B cell (primary cell): ENCODE measurements at regions of chr10 and their contacts with region 1.

Region 1: DNA sequence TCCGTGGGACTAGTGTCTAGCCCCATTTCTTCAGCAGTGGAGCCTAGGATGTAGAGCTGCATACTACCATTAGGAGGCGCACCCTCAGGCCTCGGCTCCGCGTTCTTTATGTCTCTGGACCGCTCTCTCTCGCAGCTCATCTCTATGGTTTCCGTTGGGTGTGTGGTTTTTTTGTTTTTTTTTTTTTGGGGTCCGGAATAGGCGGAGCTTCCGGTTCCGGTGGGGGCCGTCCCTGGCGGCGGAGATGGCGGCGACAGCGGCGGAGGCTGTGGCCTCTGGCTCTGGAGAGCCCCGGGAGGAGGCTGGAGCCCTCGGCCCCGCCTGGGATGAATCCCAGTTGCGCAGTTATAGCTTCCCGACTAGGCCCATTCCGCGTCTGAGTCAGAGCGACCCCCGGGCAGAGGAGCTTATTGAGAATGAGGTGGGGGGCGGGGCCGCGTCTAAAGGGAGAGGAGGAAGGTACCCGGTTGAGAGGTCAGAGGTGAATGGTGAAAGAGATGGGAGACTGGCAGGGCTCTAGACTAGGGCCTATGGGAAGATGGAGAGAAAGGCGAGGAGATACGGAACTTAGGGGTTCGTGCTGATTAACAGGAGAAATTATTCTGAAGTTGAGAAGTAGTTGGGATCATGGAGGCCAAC is at the start of gene HIF1AN:
- DNase-seq: peak; percentile 96
- ATAC-seq: peak; percentile 99
- H3K4me3 ChIP-seq: peak within 1 kb of the TSS; percentile 74 to 88 (median 75)
- H3K4me3 Mint-ChIP-seq: peak within 1 kb of the TSS; percentile 42
- H3K27ac ChIP-seq: peak within 1 kb of the TSS; percentile 34 to 83
- H3K27ac Mint-ChIP-seq: peak within 1 kb of the TSS; percentile 32
- H3K4me1 ChIP-seq: peaks cover 23 to 24% of the 10 kb centered on the region in 2 donors
- H3K4me1 Mint-ChIP-seq: peaks cover 19% of the 10 kb centered on the region
- H3K27me3 ChIP-seq: no peaks in the 10 kb centered on the region
- H3K27me3 Mint-ChIP-seq: no peaks in the 10 kb centered on the region
- CTCF ChIP-seq: peak; percentile 86
- total RNA-seq, gene HIF1AN: 65.6 and 73.8 TPM in 2 replicates

Region 2: DNA sequence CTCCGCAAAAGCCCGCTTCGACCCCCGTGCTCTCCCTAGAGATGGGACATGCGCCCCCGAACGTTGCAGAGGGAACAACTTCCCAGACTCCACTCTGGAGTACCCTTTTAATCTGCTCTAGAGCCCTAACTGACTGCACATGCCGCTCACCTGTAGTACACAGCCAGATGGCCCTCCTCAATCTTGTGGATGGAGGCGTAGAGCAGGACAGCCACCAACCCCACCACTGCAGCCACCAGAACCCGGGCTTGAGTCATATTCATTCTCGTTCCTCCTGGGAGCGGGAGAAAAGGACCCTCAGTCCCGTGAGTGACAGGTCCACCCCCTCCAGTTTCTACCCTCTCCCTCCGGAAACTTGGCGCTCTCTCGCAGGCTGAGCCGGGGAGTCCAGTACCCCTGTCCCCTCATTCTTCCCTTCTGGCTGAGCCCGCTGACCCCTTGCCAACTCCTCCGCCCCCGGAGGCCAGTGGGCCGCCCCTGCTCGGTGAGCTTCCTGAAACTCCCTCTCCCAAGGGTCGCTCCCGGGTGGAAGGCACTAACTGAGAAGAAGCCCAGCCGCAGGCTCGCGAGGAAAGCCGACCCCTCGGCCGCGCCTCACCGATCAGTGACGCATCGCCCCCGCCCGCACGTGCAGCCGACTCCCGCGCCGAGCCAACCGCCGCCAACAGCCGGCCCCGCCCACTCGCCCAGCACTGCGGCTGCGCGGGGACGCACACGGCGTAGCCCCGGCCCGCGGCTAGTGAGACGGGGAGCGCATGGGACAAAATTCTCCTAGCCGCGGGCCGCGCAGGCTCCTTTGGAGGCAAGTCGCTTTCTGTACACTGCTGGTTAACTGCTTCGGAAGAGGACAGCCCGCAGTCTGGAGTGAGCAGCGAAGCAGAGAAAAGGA is 350.2 kb before region 1 on chr10 and contains the start of gene ERLIN1:
- CTCF ChIA-PET with region 1: no interaction called
- POLR2A ChIA-PET with region 1: no interaction called
- intact Hi-C with region 1: loop called (anchors 10 kb)
- DNase-seq: peak; percentile 93
- ATAC-seq: peak; percentile 94
- H3K4me3 ChIP-seq: peak within 1 kb of the TSS; percentile 95 to 99 (median 97)
- H3K4me3 Mint-ChIP-seq: peak within 1 kb of the TSS; percentile 99
- H3K27ac ChIP-seq: peak within 1 kb of the TSS; percentile 83
- H3K27ac Mint-ChIP-seq: peak within 1 kb of the TSS; percentile 96
- H3K4me1 ChIP-seq: peaks cover 19 to 21% of the 10 kb centered on the region in 2 donors
- H3K4me1 Mint-ChIP-seq: peaks cover 46% of the 10 kb centered on the region
- H3K27me3 ChIP-seq: no peaks in the 10 kb centered on the region
- H3K27me3 Mint-ChIP-seq: no peaks in the 10 kb centered on the region
- CTCF ChIP-seq: no peak
- total RNA-seq, gene ERLIN1: 9.0 and 9.7 TPM in 2 replicates

Region 3: DNA sequence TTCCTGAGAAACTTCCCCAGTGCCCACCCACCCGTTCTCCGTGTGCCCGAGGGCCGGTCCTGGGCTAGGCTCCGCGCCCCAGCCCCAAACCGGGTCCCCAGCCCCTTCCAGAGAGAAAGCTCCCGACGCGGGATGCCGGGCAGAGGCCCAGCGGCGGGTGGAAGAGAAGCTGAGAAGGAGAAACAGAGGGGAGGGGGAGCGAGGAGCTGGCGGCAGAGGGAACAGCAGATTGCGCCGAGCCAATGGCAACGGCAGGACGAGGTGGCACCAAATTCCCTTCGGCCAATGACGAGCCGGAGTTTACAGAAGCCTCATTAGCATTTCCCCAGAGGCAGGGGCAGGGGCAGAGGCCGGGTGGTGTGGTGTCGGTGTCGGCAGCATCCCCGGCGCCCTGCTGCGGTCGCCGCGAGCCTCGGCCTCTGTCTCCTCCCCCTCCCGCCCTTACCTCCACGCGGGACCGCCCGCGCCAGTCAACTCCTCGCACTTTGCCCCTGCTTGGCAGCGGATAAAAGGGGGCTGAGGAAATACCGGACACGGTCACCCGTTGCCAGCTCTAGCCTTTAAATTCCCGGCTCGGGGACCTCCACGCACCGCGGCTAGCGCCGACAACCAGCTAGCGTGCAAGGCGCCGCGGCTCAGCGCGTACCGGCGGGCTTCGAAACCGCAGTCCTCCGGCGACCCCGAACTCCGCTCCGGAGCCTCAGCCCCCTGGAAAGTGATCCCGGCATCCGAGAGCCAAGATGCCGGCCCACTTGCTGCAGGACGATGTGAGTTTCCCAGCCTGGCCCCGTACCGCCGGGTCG is 188.9 kb before region 1 on chr10 and contains the start of gene SCD:
- CTCF ChIA-PET with region 1: interaction called, 3 read pairs
- POLR2A ChIA-PET with region 1: interaction called, 3 read pairs
- intact Hi-C with region 1: loop called (anchors 5 kb)
- DNase-seq: peak; percentile 92
- ATAC-seq: peak; percentile 95
- H3K4me3 ChIP-seq: peak within 1 kb of the TSS; percentile 62 to 74 (median 72)
- H3K4me3 Mint-ChIP-seq: peak within 1 kb of the TSS; percentile 91
- H3K27ac ChIP-seq: peak within 1 kb of the TSS; percentile 64 to 85
- H3K27ac Mint-ChIP-seq: peak within 1 kb of the TSS; percentile 78
- H3K4me1 ChIP-seq: peaks cover 14 to 23% of the 10 kb centered on the region in 2 donors
- H3K4me1 Mint-ChIP-seq: peaks cover 22% of the 10 kb centered on the region
- H3K27me3 ChIP-seq: peaks cover 0 to 8% (median 0%) of the 10 kb centered on the region in 4 experiments
- H3K27me3 Mint-ChIP-seq: no peaks in the 10 kb centered on the region
- CTCF ChIP-seq: no peak
- total RNA-seq, gene SCD: 5.1 and 5.6 TPM in 2 replicates

Region 4: GRCh38 chr10:100391163-100392002 is 144.5 kb before region 1 on chr10:
- CTCF ChIA-PET with region 1: no interaction called
- POLR2A ChIA-PET with region 1: no interaction called
- intact Hi-C with region 1: no loop called
- DNase-seq: no peak
- ATAC-seq: no peak
- H3K4me3 ChIP-seq: no peak overlapping the region
- H3K4me3 Mint-ChIP-seq: no peak overlapping the region
- H3K27ac ChIP-seq: no peak overlapping the region
- H3K27ac Mint-ChIP-seq: no peak overlapping the region
- H3K4me1 ChIP-seq: no peaks in the 10 kb centered on the region
- H3K4me1 Mint-ChIP-seq: peaks cover 2% of the 10 kb centered on the region
- H3K27me3 ChIP-seq: no peaks in the 10 kb centered on the region
- H3K27me3 Mint-ChIP-seq: peaks cover 13% of the 10 kb centered on the region
- CTCF ChIP-seq: no peak

Region 5: DNA sequence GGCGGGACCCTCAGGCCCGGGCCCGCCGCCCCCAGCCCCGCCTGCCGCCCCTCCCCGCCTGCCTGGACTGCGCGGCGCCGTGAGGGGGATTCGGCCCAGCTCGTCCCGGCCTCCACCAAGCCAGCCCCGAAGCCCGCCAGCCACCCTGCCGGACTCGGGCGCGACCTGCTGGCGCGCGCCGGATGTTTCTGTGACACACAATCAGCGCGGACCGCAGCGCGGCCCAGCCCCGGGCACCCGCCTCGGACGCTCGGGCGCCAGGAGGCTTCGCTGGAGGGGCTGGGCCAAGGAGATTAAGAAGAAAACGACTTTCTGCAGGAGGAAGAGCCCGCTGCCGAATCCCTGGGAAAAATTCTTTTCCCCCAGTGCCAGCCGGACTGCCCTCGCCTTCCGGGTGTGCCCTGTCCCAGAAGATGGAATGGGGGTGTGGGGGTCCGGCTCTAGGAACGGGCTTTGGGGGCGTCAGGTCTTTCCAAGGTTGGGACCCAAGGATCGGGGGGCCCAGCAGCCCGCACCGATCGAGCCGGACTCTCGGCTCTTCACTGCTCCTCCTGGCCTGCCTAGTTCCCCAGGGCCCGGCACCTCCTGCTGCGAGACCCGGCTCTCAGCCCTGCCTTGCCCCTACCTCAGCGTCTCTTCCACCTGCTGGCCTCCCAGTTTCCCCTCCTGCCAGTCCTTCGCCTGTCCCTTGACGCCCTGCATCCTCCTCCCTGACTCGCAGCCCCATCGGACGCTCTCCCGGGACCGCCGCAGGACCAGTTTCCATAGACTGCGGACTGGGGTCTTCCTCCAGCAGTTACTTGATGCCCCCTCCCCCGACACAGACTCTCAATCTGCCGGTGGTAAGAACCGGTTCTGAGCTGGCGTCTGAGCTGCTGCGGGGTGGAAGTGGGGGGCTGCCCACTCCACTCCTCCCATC is 292.2 kb after region 1 on chr10:
- CTCF ChIA-PET with region 1: no interaction called
- POLR2A ChIA-PET with region 1: no interaction called
- intact Hi-C with region 1: loop called (anchors 10 kb)
- DNase-seq: peak; percentile 63
- ATAC-seq: peak; percentile 46
- H3K4me3 ChIP-seq: peak overlapping the region in 4 of 5 experiments; percentile 46 to 71 (median 62)
- H3K4me3 Mint-ChIP-seq: peak overlapping the region; percentile 87
- H3K27ac ChIP-seq: no peak overlapping the region
- H3K27ac Mint-ChIP-seq: peak overlapping the region; percentile 53
- H3K4me1 ChIP-seq: peaks cover 49 to 54% of the 10 kb centered on the region in 2 donors
- H3K4me1 Mint-ChIP-seq: peaks cover 43% of the 10 kb centered on the region
- H3K27me3 ChIP-seq: peaks cover 0 to 91% (median 59%) of the 10 kb centered on the region in 4 experiments
- H3K27me3 Mint-ChIP-seq: peaks cover 75% of the 10 kb centered on the region
- CTCF ChIP-seq: no peak